ENCODE measurements at regions of chr1 and their contacts with region 1.

Region 1: DNA sequence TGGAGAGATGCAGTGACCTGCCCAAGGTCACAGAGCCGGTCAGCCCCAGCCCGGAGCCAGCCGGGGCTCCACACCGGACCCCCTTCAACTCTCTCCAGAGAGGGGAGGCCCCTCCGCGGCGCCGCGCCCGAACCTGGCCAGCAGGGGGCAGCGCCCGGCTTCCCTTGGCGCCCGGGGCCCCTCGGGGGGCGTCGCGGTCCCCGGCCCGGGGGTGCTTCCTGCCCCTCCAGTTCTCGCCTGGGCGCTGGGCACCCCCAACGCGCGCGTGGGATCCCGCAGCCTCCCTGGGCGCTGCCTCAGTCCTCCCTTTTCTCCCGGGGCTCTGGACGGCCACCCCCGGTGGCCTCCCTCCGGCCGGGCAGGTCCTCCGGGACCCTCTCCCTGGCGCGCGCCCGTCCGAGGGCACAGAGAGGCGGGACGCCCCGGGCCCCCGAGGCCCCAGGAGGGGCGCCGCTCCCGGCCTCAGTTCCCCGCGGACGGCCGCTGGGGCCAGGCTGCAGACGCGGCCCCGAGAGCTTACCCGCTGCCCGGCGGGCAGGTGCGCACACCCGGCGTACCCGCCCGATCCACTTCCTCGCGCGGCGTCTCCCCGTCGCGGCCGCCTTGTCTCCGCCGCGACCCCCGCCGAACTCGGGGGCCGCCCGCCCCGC is 406 bp downstream of the HTR1D start:
- DNase-seq: peak; percentile 41 to 88 (median 80)
- ATAC-seq: peak; percentile 86
- H3K4me3 ChIP-seq: peak overlapping the region; percentile 42
- H3K27ac ChIP-seq: no peak overlapping the region
- H3K4me1 ChIP-seq: peaks cover 0 to 13% of the 10 kb centered on the region in 2 experiments; a peak in 4 of 5 replicates
- H3K27me3 ChIP-seq: peaks cover 34 to 60% of the 10 kb centered on the region in 2 experiments
- CTCF ChIP-seq: peak; percentile 76 to 87 (median 77)
- EP300 ChIP-seq: no peak
- POLR2A ChIP-seq: no peak
- RAD21 ChIP-seq: peak; percentile 75 to 89

Region 2: GRCh38 chr1:23019094-23019862 is 197.6 kb before region 1 on chr1 and contains the start of gene KDM1A:
- CTCF ChIA-PET with region 1: no interaction called
- POLR2A ChIA-PET with region 1: no interaction called
- in situ Hi-C with region 1: no loop called
- intact Hi-C with region 1: no loop called
- DNase-seq: peak; percentile 92 to 100 (median 94)
- ATAC-seq: peak; percentile 97
- H3K4me3 ChIP-seq: peak within 1 kb of the TSS; percentile 94
- H3K27ac ChIP-seq: peak within 1 kb of the TSS; percentile 91
- H3K4me1 ChIP-seq: peaks cover 7 to 8% of the 10 kb centered on the region in 2 experiments; a peak in 4 of 5 replicates
- H3K27me3 ChIP-seq: no peaks in the 10 kb centered on the region
- CTCF ChIP-seq: peak; percentile 48 to 60 (median 53)
- EP300 ChIP-seq: peak; percentile 84
- POLR2A ChIP-seq: peak; percentile 97
- RAD21 ChIP-seq: no peak
- polyA plus RNA-seq, gene KDM1A: 59.2 to 70.3 TPM

Region 3: DNA sequence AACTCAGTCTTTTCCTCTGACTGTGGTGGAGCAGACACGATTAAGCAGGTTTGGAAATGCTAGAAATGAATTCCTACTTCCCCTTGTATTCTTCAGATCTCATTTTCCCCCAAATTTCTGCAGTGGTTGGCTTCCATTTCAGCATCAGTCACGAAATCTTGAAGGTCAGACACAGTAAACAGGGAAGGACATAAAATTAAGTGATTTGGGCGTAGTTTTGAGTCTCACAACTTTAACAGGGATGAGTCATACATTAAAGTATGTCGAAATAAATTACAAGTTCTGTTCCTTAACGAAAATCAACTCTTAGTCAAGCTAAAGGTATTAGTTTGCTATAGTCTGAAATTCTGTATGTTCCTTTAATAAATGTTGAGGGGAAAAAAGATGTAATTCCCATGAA is 66.1 kb after region 1 on chr1:
- CTCF ChIA-PET with region 1: no interaction called
- POLR2A ChIA-PET with region 1: no interaction called
- in situ Hi-C with region 1: loop called (anchors 5 kb)
- intact Hi-C with region 1: loop called (anchors 5 kb)
- DNase-seq: no peak
- ATAC-seq: no peak
- H3K4me3 ChIP-seq: no peak overlapping the region
- H3K27ac ChIP-seq: no peak overlapping the region
- H3K4me1 ChIP-seq: no peaks in the 10 kb centered on the region
- H3K27me3 ChIP-seq: no peaks in the 10 kb centered on the region
- CTCF ChIP-seq: no peak
- EP300 ChIP-seq: no peak
- POLR2A ChIP-seq: no peak
- RAD21 ChIP-seq: no peak